ENCODE measurements at regions of chr17 and their contacts with region 1.

Region 1: GRCh38 chr17:15502369-15503112 is 35.1 kb upstream of the CDRT4 start:
- DNase-seq: peak; percentile 90
- H3K4me3 Mint-ChIP-seq: no peak overlapping the region
- H3K27ac Mint-ChIP-seq: no peak overlapping the region
- H3K4me1 Mint-ChIP-seq: peaks cover 7% of the 10 kb centered on the region
- H3K27me3 Mint-ChIP-seq: no peaks in the 10 kb centered on the region

Region 2: GRCh38 chr17:15257258-15257788 is 245.2 kb before region 1 on chr17:
- intact Hi-C with region 1: loop called (anchors 1 kb)
- DNase-seq: peak; percentile 88
- H3K4me3 Mint-ChIP-seq: peak overlapping the region; percentile 5
- H3K27ac Mint-ChIP-seq: no peak overlapping the region
- H3K4me1 Mint-ChIP-seq: peaks cover 20% of the 10 kb centered on the region
- H3K27me3 Mint-ChIP-seq: peaks cover 53% of the 10 kb centered on the region